AG04450 (cell line): ENCODE measurements at regions of chr22 and their contacts with region 1.

Region 1: DNA sequence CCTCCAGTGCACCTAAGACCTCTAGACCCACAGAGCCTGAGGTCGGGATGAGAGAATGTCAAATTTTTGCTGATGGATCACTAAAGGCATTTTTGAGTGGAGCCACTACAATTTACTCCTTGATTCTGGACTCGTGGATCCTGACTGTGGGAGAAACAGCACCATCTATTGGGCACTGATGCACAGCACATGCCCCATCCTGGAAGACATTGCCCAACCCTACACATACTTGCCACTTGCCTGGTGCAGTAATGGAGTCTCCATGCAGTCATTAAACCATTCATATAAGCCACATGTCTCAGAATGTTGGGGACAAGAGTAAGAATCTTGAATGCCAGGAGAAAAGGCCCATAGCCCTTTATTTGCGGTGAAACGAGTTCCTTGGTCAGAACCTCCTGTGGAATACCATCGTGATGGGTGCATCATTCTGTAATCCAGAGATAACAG is 103.9 kb downstream of the GGTLC2 start:
- DNase-seq: peak; percentile 8
- H3K4me3 ChIP-seq: no peak overlapping the region
- H3K27ac ChIP-seq: no peak overlapping the region
- H3K27me3 ChIP-seq: peaks cover 4% of the 10 kb centered on the region
- CTCF ChIP-seq: peak; percentile 87

Region 2: DNA sequence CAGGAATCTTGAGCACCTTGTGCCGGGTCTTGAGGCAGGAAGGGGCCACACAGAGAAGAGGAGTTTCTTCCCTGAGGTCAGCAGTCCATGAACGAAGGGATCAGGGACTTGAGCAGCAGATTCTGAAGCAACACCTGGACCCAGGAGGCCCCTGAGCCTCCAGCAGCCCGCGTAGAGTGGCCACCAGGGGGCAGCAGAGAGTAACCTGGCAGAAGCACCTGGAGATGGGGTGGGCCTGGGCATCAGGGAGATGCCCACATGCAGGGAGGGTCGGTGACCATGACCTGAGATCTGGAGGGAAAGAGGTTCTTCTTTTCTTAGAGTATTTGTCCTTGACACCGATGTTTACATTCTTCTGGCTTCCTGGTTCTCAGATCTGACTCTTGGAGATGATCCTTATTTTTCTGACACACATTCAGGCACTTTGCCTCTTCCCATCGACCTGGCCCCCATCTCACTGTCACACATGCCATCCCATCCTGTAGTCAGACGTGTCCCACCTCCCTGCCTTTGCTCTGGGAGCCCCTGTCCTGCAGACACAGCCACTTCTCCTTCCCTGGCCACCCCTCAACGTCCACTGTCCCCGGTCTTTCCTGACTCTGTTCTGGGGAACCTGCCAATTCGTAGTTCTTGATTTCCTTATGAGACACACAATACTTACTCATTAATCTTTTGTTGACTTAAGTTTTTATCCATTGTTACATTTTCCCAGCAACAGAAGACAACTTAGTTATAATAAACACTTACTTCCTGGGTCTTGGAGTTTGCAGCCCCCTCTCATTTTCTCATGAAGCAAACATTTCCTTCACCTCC is 37.4 kb before region 1 on chr22:
- CTCF ChIA-PET with region 1: interaction called, 18 read pairs
- POLR2A ChIA-PET with region 1: no interaction called
- DNase-seq: no peak
- H3K4me3 ChIP-seq: no peak overlapping the region
- H3K27ac ChIP-seq: no peak overlapping the region
- H3K27me3 ChIP-seq: peaks cover 5% of the 10 kb centered on the region
- CTCF ChIP-seq: peak; percentile 86

Region 3: GRCh38 chr22:22720201-22720723 is 28.1 kb before region 1 on chr22:
- CTCF ChIA-PET with region 1: interaction called, 12 read pairs
- POLR2A ChIA-PET with region 1: no interaction called
- DNase-seq: no peak
- H3K4me3 ChIP-seq: no peak overlapping the region
- H3K27ac ChIP-seq: no peak overlapping the region
- H3K27me3 ChIP-seq: peaks cover 2% of the 10 kb centered on the region
- CTCF ChIP-seq: peak; percentile 45

Region 4: GRCh38 chr22:22761963-22762772 is 13.8 kb after region 1 on chr22:
- CTCF ChIA-PET with region 1: interaction called, 12 read pairs
- POLR2A ChIA-PET with region 1: no interaction called
- DNase-seq: no peak
- H3K4me3 ChIP-seq: no peak overlapping the region
- H3K27ac ChIP-seq: no peak overlapping the region
- H3K27me3 ChIP-seq: peaks cover under 1% of the 10 kb centered on the region
- CTCF ChIP-seq: no peak

Region 5: GRCh38 chr22:22870577-22871404 is 122.5 kb after region 1 on chr22:
- CTCF ChIA-PET with region 1: no interaction called
- POLR2A ChIA-PET with region 1: no interaction called
- DNase-seq: no peak
- H3K4me3 ChIP-seq: no peak overlapping the region
- H3K27ac ChIP-seq: no peak overlapping the region
- H3K27me3 ChIP-seq: peaks cover 2% of the 10 kb centered on the region
- CTCF ChIP-seq: no peak